ENCODE measurements at regions of chr17 and their contacts with region 1.

Region 1: GRCh38 chr17:74089869-74090464 is 113.5 kb upstream of the RPL38 start:
- DNase-seq: peak; percentile 95
- ATAC-seq: peak; percentile 93
- H3K4me3 Mint-ChIP-seq: no peak overlapping the region
- H3K27ac Mint-ChIP-seq: no peak overlapping the region
- H3K4me1 Mint-ChIP-seq: no peaks in the 10 kb centered on the region
- H3K27me3 Mint-ChIP-seq: peaks cover 13% of the 10 kb centered on the region; the same call in 1 of the 2 replicates
- CTCF ChIP-seq: peak; percentile 76

Region 2: DNA sequence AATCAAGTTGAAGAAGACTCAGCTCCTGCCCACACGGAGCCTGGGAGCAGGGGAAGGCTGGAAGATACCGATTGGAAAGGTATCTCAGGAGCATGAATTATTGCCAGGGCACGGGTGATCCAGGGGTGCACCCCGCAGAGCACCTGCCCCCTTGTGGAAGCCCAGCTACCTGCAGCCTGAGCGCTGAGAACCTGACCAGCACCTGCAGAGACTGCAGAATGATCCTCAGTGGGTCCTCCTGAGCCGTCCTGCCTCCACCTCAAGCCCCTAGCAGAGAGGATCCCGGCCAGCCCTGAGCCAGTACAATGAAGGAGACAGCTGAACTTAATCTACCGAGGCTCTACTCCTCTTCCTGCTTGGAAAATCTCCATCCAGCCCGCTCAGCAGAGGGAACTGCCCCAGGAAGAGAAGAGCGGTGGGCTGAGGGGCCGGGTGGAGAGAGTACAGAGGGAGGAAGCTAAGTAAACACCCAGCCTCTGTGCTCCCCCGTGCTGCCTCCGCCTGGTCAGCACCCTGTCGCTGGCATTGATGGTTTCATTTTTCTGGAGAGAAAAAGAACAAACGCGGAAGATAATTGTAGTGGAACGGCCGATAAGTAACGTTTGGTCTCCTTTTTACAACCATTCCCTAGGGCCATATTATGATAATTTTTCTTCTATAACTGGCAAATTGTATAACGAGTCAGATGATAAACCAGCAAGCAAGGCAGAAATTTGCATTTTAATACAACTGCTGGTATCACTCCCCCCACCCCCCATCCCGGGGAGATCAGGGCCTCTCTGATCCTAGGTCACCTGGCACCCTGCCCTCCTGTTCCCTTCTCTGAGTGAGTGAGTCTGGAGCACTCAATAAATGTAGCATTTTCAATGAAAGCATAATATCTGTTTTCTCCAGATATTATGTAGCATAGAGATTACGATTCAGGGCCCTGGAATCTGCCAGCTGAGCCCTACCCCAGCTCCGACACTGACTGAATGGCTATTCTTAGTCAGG is 91.0 kb before region 1 on chr17:
- CTCF ChIA-PET with region 1: interaction called, 17 read pairs
- POLR2A ChIA-PET with region 1: no interaction called
- DNase-seq: peak; percentile 88
- ATAC-seq: peak; percentile 99
- H3K4me3 Mint-ChIP-seq: no peak overlapping the region
- H3K27ac Mint-ChIP-seq: no peak overlapping the region
- H3K4me1 Mint-ChIP-seq: peaks cover 11% of the 10 kb centered on the region
- H3K27me3 Mint-ChIP-seq: peaks cover 5% of the 10 kb centered on the region; the same call in 1 of the 2 replicates
- CTCF ChIP-seq: peak; percentile 92

Region 3: GRCh38 chr17:74070374-74070773 is 19.6 kb before region 1 on chr17:
- CTCF ChIA-PET with region 1: interaction called, 12 read pairs
- POLR2A ChIA-PET with region 1: no interaction called
- DNase-seq: no peak
- ATAC-seq: no peak
- H3K4me3 Mint-ChIP-seq: no peak overlapping the region
- H3K27ac Mint-ChIP-seq: no peak overlapping the region
- H3K4me1 Mint-ChIP-seq: no peaks in the 10 kb centered on the region
- H3K27me3 Mint-ChIP-seq: peaks cover 3% of the 10 kb centered on the region; the same call in 1 of the 2 replicates
- CTCF ChIP-seq: no peak

Region 4: DNA sequence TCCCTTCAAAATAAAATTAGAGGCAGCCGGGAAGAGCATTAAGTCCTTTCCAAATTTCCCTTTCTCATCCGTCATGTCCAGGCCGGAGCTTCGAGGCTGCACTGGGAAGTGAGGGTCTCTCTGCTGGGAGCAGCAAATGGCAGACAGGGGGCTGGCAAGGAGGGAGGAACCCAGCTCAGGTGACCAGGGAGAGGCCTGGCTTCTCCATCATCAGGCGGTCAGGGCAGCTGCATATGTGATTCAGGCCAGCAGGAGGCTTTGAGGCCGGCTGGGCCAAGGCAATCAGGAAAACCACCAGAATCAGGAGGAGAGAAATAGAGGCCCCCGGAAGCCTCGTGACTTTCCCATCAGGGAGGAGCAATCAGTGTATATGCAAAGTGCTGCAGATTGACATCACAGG is 28.5 kb after region 1 on chr17:
- CTCF ChIA-PET with region 1: interaction called, 100 read pairs
- POLR2A ChIA-PET with region 1: interaction called, 5 read pairs
- DNase-seq: peak; percentile 79
- ATAC-seq: peak; percentile 87
- H3K4me3 Mint-ChIP-seq: 0 out of 2 replicates have a peak overlapping the region, but pooled peaks have one; percentile 13
- H3K27ac Mint-ChIP-seq: peak overlapping the region; percentile 69
- H3K4me1 Mint-ChIP-seq: peaks cover 51% of the 10 kb centered on the region
- H3K27me3 Mint-ChIP-seq: peaks cover 6% of the 10 kb centered on the region; the same call in 1 of the 2 replicates
- CTCF ChIP-seq: 0 out of 2 replicates have a peak, but pooled peaks have one; percentile 27

Region 5: DNA sequence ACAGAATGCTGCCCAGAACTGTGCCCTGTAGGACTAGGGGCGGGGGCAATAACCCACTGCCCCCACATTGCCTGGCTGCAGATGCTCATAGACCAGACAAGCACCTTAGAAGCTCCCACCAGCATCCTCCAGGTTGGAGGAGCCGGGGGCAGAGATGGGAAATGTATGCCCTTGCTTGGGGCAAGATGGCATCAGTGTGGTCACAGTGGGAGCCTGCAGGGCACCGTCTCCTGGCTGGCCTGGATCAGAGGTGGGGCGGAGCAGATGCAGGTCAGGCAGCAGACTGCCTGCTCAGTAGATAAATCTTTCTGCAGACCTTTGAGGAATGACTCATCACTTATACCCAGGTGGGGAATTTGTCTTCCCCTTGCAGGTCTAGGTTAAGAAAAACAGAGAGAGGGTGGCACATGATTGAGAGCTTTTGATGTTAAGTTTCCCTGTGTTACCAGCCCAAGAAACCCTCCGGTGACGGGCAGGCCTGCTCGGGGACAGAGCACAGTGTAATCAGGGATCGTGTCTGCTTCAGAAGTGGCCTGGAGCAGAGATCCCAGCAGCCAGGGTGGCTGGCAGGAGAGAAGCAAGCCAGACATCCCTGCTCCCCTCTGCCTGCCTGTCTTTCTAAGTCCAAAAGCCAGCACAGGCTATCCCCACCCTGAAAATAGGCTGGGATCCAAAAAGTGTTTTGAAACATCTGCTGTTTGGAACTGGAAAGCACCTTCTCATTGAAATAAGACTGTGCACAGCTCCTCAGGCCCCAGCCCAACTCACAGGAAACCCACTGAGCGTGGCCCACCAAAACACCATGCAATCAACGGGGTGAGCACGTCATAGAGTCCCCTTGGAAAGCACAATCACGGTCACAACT is 62.9 kb after region 1 on chr17:
- CTCF ChIA-PET with region 1: interaction called, 10 read pairs
- POLR2A ChIA-PET with region 1: no interaction called
- DNase-seq: no peak
- ATAC-seq: no peak
- H3K4me3 Mint-ChIP-seq: no peak overlapping the region
- H3K27ac Mint-ChIP-seq: no peak overlapping the region
- H3K4me1 Mint-ChIP-seq: peaks cover 17% of the 10 kb centered on the region
- H3K27me3 Mint-ChIP-seq: no peaks in the 10 kb centered on the region; the same call in 1 of the 2 replicates
- CTCF ChIP-seq: no peak

Region 6: DNA sequence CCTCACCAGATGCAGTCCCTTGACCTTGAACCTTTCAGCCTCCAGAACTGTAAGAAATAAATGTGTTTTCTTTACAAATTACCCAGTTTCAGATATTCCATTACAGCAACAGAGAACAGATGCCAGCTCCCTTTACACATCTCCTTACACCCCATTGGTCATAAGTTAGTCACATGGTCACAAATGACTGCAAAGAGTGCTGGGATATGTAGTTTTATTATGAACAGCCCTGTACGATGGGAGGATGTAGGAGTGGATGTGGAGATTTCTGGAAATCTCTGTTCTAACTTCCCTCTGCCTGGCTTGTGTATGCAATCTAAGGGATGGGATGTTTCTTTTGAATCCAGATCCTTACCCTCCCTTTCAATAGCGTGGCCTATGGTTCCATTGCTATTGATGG is 100.2 kb after region 1 on chr17:
- CTCF ChIA-PET with region 1: interaction called, 10 read pairs
- POLR2A ChIA-PET with region 1: no interaction called
- DNase-seq: no peak
- ATAC-seq: peak; percentile 85
- H3K4me3 Mint-ChIP-seq: no peak overlapping the region
- H3K27ac Mint-ChIP-seq: no peak overlapping the region
- H3K4me1 Mint-ChIP-seq: peaks cover 16% of the 10 kb centered on the region
- H3K27me3 Mint-ChIP-seq: no peaks in the 10 kb centered on the region; the same call in 1 of the 2 replicates
- CTCF ChIP-seq: no peak

Region 7: DNA sequence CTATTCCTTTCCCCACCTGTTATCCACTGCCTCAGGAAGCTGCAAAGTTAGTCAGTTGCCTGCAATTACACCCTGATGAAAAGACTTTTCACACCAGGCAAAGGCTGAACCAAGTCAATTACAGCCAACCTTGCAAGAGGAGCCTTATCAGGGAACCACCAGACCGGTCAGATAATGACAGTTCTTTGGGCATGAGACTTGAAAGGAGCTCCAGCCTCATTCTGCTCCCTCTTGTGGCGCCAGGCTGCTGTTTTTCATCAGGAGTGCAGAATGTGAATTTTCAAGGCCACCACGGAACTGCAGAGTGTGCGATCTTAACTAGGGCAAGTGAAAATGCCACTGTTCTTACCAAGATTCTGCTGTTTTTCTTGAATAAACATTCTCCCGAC is 206.6 kb after region 1 on chr17:
- CTCF ChIA-PET with region 1: no interaction called
- POLR2A ChIA-PET with region 1: no interaction called
- DNase-seq: peak; percentile 56
- ATAC-seq: peak; percentile 74
- H3K4me3 Mint-ChIP-seq: no peak overlapping the region
- H3K27ac Mint-ChIP-seq: no peak overlapping the region
- H3K4me1 Mint-ChIP-seq: no peaks in the 10 kb centered on the region
- H3K27me3 Mint-ChIP-seq: peaks cover 2% of the 10 kb centered on the region; the same call in 1 of the 2 replicates
- CTCF ChIP-seq: no peak; the same call in 1 of the 2 replicates

Measured in WTC11 (cell line).